ENCODE measurements at regions of chr16 and their contacts with region 1.

Region 1: DNA sequence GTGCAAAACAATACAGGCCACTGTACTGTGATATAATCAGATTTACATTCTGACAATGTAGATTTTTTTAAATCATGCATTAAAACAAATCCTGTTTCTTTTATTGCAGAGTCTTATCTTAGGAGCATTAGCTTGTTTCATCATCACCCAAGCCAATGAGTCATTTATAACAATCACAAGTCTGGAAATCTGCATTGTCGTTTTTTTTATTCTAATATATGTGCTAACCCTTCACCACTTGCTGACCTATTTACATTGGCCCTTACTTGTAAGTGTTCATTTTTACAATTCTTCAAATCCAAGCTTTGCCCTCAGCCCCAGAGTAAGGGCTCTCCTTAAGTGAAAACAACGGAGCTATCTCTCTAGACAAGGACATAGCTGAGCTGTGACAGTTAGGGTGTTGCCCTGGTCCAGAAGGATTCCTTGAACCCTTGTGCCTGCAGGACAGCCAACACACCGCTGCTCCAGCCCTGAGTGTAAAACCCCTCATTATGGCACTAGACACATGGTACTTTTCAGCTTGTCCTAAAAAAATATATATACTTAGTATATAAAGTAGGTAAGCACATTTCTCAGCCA is 3.7 kb downstream of the CMTM1 start:
- DNase-seq: peak in 2 of 3 donors; percentile 38 to 52
- H3K4me3 ChIP-seq: no peak overlapping the region
- H3K4me3 Mint-ChIP-seq: no peak overlapping the region
- H3K27ac ChIP-seq: no peak overlapping the region
- H3K27ac Mint-ChIP-seq: peak overlapping the region in 1 of 7 donors; percentile 4
- H3K4me1 ChIP-seq: peaks cover 7 to 17% of the 10 kb centered on the region in 2 donors
- H3K4me1 Mint-ChIP-seq: peaks cover 18% of the 10 kb centered on the region
- H3K27me3 ChIP-seq: no peaks in the 10 kb centered on the region
- H3K27me3 Mint-ChIP-seq: peaks cover 0 to 3% (median 0%) of the 10 kb centered on the region in 3 donors
- CTCF ChIP-seq: no peak

Region 2: GRCh38 chr16:66524601-66525164 is 45.2 kb before region 1 on chr16:
- intact Hi-C with region 1: no loop called
- DNase-seq: peak; percentile 93 to 98 (median 96)
- H3K4me3 ChIP-seq: peak overlapping the region in 1 of 3 experiments; percentile 27
- H3K4me3 Mint-ChIP-seq: peak overlapping the region in 1 of 2 donors; percentile 26
- H3K27ac ChIP-seq: peak overlapping the region; percentile 99
- H3K27ac Mint-ChIP-seq: peak overlapping the region; percentile 99 to 100 (median 100)
- H3K4me1 ChIP-seq: peaks cover 79 to 84% of the 10 kb centered on the region in 2 donors
- H3K4me1 Mint-ChIP-seq: peaks cover 86% of the 10 kb centered on the region
- H3K27me3 ChIP-seq: no peaks in the 10 kb centered on the region
- H3K27me3 Mint-ChIP-seq: peaks cover 0 to 2% (median 2%) of the 10 kb centered on the region in 3 donors
- CTCF ChIP-seq: peak; percentile 43

Region 3: GRCh38 chr16:66608241-66609138 is 38.6 kb after region 1 on chr16:
- intact Hi-C with region 1: loop called in 1 of 2 experiments (anchors 5 kb)
- DNase-seq: peak; percentile 47 to 68 (median 65)
- H3K4me3 ChIP-seq: peak overlapping the region in 1 of 3 experiments; percentile 11
- H3K4me3 Mint-ChIP-seq: peak overlapping the region in 1 of 2 donors; percentile 16
- H3K27ac ChIP-seq: peak overlapping the region; percentile 39 to 40
- H3K27ac Mint-ChIP-seq: peak overlapping the region; percentile 21 to 87 (median 71)
- H3K4me1 ChIP-seq: peaks cover 42 to 45% of the 10 kb centered on the region in 2 donors
- H3K4me1 Mint-ChIP-seq: peaks cover 41% of the 10 kb centered on the region
- H3K27me3 ChIP-seq: no peaks in the 10 kb centered on the region
- H3K27me3 Mint-ChIP-seq: peaks cover 6 to 9% (median 7%) of the 10 kb centered on the region in 3 donors
- CTCF ChIP-seq: peak; percentile 72